GM10248 (cell line): ENCODE measurements at regions of chr17 and their contacts with region 1.

Region 1: DNA sequence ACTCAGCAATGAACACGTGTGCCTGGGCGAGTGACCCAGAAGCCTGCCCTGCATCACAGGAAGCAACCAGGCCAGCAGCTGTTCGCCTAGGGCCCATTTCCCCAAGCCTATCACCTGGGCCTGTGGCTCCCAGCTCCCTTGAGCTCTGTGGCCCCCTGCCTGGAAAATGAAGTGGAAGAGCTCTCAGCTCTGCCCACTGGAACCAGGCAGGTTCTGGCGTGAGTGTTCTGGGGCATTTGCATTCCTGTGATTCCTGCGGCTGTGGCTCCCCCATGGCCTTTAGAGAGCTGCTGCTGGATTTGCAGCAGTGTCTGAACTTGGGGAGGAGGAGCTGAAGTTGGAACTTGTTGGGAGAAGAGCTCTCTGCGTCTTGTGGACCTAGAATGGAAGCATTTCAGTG is 22.8 kb downstream of the PGS1 start:
- DNase-seq: no peak
- CTCF ChIP-seq: no peak

Region 2: DNA sequence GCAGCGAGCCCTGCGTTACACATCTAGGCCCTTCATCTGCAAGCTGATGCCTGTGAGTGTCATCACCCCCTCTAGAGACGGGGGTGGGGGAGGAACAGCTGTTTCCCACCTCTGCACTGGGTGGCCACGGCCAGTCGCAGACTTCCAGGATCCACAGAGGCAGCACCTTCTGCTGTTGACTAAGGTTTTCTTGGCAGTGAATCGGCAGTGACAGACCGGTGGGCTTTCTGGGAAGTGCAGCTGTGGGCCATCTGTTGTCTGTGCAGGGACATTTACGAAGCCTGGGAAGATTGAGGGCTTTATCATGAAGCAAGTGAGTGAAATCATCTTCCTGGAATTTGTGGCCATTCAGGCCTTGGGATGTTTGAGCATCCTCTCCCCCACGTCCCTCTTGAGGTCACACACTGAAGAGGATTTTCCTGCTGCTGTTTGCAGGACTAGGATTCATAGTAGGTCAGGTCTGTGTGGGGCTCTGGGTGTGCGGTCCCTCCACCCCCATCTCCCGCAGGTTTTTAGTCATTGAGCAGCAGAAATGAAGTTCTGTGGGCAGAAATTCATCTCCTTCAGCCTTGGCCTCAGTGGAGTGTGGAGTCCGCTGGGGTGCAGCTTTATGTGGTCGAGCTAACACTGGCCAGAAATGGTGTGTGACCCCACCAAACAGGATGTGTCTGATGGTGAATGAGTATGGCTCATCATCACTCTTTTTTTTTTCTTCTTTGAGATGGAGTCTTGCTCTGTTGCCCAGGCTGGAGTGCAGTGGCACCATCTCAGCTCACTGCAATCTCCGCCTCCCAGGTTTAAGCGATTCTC is 10.8 kb before region 1 on chr17:
- CTCF ChIA-PET with region 1: interaction called, 29 read pairs
- POLR2A ChIA-PET with region 1: no interaction called
- DNase-seq: no peak
- CTCF ChIP-seq: no peak